Spleen (tissue), 13 donors: ENCODE measurements at regions of chr21 and their contacts with region 1.

Region 1: GRCh38 chr21:35840197-35840799 is 220.0 kb downstream of the SETD4 start:
- DNase-seq: no peak
- H3K4me3 ChIP-seq: no peak overlapping the region
- H3K27ac ChIP-seq: no peak overlapping the region
- H3K4me1 ChIP-seq: no peaks in the 10 kb centered on the region
- H3K27me3 ChIP-seq: peaks cover 0 to 11% (median 0%) of the 10 kb centered on the region in 7 donors
- CTCF ChIP-seq: peak; percentile 39 to 82 (median 74)
- POLR2A ChIP-seq: no peak

Region 2: DNA sequence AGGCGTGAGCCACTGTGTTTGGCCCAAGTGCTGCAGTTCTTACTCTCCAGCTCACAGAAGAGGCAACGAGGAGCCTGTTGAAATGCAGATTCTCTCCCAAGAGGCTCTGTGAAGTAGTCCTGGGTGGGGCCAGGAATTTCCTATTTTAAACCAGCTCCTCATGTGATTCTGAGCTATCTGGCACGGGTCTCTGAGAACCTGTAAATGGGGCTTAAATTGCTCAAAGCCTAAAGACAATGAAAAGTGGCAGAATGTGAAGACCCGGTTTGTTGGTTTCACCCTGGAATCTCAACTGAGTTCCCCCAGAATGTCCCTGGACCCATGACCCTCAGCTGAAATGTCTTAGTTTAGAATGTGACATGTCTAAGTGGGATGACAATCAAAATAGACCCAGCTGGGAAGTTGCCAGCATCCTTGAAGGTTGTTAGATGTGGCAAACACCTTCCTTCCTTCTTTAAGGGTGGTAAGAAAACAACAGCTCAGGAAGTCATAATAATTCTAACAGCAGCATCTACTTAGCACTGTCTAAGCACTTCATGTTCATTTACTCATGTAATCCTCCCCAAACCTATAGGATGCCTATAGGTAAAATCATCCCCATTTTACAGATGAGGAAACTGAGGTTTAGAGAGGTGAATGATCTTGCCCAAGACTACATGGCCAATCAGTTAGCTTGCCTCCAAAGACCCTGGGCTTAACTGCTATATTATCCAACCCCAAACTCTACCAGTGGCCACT is 1903.8 kb before region 1 on chr21:
- intact Hi-C with region 1: no loop called
- DNase-seq: no peak
- H3K4me3 ChIP-seq: peak overlapping the region in 1 of 8 donors; percentile 6
- H3K27ac ChIP-seq: peak overlapping the region in 7 of 8 donors; percentile 45 to 80 (median 71)
- H3K4me1 ChIP-seq: peaks cover 0 to 69% (median 33%) of the 10 kb centered on the region in 6 donors
- H3K27me3 ChIP-seq: no peaks in the 10 kb centered on the region
- CTCF ChIP-seq: no peak
- POLR2A ChIP-seq: no peak

Region 3: GRCh38 chr21:34693192-34693810 is 1147.0 kb before region 1 on chr21:
- intact Hi-C with region 1: loop called (anchors 5 kb)
- DNase-seq: no peak
- H3K4me3 ChIP-seq: no peak overlapping the region
- H3K27ac ChIP-seq: no peak overlapping the region
- H3K4me1 ChIP-seq: peaks cover 0 to 8% (median 3%) of the 10 kb centered on the region in 6 donors
- H3K27me3 ChIP-seq: peaks cover 0 to 21% (median 0%) of the 10 kb centered on the region in 7 donors
- CTCF ChIP-seq: peak; percentile 38 to 86 (median 80)
- POLR2A ChIP-seq: no peak

Region 4: DNA sequence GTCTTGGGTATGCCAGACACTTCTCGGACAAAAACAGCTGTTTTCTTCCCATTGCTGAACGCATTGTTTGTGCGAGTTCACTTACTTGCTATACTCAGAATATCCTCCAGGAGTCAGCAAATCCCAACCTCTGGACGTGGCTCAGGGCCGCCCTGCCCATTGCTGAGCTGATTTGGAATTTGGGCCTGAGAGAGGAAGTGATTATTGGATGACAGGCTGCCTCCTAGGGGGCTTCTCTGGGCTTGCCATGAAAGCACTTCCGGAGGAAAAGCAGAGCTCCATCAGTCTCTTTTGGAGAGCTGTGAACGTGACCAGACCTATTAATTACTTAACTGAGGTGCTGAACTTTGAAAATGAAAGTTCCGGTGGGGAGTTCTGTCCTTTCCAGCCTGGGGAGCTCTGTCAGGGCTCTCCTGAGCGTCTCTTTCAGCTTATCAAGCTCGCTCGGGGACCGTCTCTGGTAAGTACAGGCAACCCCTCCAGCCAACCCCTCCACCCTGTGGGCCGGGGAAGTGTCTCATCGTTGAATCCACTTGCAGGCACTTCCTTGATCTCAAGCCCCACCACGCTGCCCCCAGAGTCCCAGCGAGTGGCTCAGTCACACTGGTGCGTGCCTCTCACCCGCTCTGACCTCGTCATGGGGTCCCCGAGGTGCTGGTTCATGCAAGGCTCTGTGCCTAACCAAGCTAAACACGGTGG is 1094.6 kb before region 1 on chr21:
- intact Hi-C with region 1: loop called (anchors 5 kb)
- DNase-seq: peak; percentile 87
- H3K4me3 ChIP-seq: peak overlapping the region in 4 of 8 donors; percentile 3 to 51 (median 10)
- H3K27ac ChIP-seq: peak overlapping the region in 3 of 8 donors; percentile 6 to 35 (median 11)
- H3K4me1 ChIP-seq: peaks cover 0 to 16% (median 12%) of the 10 kb centered on the region in 6 donors
- H3K27me3 ChIP-seq: peaks cover 0 to 16% (median 0%) of the 10 kb centered on the region in 7 donors
- CTCF ChIP-seq: peak; percentile 57 to 90 (median 79)
- POLR2A ChIP-seq: no peak

Region 5: DNA sequence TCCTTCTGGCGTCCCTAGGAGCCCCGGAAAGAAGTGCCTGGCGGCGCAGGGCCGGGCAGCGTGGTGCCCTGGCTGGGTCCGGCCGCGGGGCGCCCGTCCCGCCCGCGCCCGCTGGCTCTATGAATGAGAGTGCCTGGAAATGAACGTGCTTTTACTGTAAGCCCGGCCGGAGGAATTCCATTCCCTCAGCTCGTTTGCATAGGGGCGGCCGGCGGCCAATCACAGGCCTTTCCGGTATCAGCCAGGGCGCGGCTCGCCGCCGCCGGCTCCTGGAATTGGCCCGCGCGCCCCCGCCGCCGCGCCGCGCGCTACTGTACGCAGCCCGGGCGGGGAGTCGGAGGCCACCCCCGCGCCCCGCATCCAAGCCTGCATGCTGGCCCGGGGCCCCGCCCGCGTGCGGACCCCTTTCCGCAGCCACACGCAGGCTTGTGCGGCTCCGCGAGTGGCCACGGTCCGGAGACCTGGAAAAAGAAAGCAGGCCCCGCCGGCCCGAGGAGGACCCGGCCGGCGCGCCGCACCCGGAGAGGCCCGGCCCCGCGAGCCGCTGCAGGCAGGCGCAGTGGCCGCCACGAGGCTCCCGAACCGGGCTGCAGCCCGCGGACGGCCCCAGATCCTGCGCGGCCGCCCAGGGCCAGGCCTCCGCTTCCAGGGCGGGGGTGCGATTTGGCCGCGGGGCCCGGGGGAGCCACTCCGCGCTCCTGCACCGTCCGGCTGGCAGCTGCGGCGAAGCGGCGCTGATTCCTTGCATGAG is 951.6 kb before region 1 on chr21:
- intact Hi-C with region 1: loop called (anchors 10 kb)
- DNase-seq: peak; percentile 96
- H3K4me3 ChIP-seq: peak overlapping the region; percentile 60 to 96 (median 88)
- H3K27ac ChIP-seq: peak overlapping the region; percentile 84 to 98 (median 95)
- H3K4me1 ChIP-seq: peaks cover 15 to 90% (median 58%) of the 10 kb centered on the region in 6 donors
- H3K27me3 ChIP-seq: peaks cover 0 to 60% (median 14%) of the 10 kb centered on the region in 7 donors
- CTCF ChIP-seq: peak in 2 of 11 experiments; percentile 16 to 37
- POLR2A ChIP-seq: peak; percentile 34 to 93 (median 69)

Region 6: DNA sequence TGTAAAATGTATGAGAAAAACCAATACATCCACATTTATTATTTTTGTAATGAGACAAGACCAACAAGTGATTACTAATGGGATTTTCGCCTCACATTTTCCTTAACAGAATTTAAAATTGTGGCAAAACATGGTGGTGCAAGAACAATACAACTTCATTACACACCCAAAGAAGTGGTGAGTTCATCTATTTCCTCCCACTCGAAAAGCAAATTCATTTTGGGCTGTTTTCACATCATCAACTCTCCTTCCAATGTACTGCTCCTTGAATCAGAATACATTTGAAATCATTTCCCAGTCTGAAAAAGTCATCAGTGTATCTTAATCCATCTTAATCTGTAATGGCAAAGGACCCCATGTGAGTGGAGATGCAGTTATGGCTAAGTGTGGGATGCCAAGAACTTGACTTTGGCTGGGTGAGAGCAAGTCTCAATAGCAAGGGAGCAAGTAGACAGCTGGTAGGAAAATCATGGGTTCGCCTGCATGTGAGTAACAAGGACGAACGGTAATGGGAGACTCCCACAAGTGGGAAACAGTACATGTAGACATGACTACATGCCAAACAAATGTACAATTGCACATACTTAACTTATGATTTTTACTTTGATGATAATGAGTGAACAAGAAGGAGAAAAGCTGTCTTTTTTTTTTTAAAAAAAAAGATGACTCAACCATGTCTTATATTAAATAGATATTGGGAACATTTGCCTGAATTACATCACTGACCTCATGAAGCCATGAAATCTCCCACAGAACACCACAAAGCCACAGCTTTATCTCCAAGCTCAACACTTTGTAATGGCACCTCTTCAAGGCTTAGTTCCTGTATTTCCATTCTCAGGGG is 837.2 kb before region 1 on chr21:
- intact Hi-C with region 1: no loop called
- DNase-seq: no peak
- H3K4me3 ChIP-seq: no peak overlapping the region
- H3K27ac ChIP-seq: no peak overlapping the region
- H3K4me1 ChIP-seq: peaks cover 0 to 72% (median 18%) of the 10 kb centered on the region in 6 donors
- H3K27me3 ChIP-seq: no peaks in the 10 kb centered on the region
- CTCF ChIP-seq: no peak
- POLR2A ChIP-seq: no peak

Region 7: DNA sequence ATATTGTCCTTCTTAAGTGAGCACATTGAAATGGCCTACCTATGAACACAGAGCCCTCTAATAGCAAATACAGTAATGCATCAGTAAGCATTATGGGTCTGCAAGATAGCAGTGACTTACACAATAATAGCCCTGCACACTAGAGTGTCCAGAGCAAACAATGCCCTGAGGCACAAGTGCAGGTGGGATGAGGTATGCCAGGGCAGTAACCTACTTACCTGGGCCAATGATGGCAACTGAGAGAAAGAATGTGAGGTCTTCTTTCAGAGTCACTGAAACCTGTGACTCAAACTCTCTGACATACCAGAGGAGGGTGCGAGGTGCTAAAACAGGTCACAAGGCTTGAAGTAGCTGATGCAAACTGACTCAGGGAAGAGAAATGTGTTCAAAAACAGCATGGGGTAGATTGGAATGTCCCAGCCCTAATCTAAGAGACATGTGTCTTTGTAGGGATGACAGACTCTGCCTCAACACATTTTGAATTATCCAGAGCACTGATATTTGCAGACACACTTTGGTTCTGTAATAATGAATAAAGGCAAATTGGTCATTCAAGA is 622.7 kb before region 1 on chr21:
- intact Hi-C with region 1: no loop called
- DNase-seq: no peak
- H3K4me3 ChIP-seq: no peak overlapping the region
- H3K27ac ChIP-seq: no peak overlapping the region
- H3K4me1 ChIP-seq: peaks cover 6 to 12% (median 9%) of the 10 kb centered on the region in 6 donors
- H3K27me3 ChIP-seq: no peaks in the 10 kb centered on the region
- CTCF ChIP-seq: no peak
- POLR2A ChIP-seq: no peak

Region 8: GRCh38 chr21:35423709-35424108 is 416.6 kb before region 1 on chr21:
- intact Hi-C with region 1: no loop called
- DNase-seq: no peak
- H3K4me3 ChIP-seq: no peak overlapping the region
- H3K27ac ChIP-seq: peak overlapping the region in 2 of 8 donors; percentile 14 to 19
- H3K4me1 ChIP-seq: peaks cover 0 to 14% (median 11%) of the 10 kb centered on the region in 6 donors
- H3K27me3 ChIP-seq: peaks cover 0 to 33% (median 0%) of the 10 kb centered on the region in 7 donors
- CTCF ChIP-seq: no peak
- POLR2A ChIP-seq: no peak